Left lung (tissue), 14 donors: ENCODE measurements at regions of chr17 and their contacts with region 1.

Region 1: DNA sequence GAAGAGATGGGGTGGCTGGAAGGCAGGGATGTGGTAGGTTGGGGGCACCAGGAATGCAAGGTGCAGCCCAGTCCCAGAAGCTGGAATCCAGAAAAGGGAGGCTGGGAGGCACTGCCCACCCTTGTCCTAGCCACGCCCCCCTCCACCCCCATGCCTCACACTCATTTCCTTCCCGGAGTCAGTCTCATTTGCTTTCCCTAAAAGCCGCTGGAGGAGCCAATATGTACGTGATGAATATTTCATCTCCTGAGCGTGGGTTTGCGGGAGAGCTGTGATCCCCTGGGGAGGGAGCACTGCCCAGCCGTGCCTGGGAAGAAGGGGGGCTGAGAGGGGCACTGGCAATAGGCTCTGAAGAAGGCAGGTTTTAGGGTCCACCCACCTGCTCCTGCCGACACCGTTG is 124.5 kb upstream of the LHX1 start:
- DNase-seq: no peak
- ATAC-seq: no peak
- H3K4me3 ChIP-seq: no peak overlapping the region
- H3K27ac ChIP-seq: no peak overlapping the region
- H3K4me1 ChIP-seq: peaks cover 0 to 5% of the 10 kb centered on the region in 2 donors
- H3K27me3 ChIP-seq: peaks cover 26 to 94% of the 10 kb centered on the region in 2 donors
- CTCF ChIP-seq: no peak

Region 2: GRCh38 chr17:36859706-36860105 is 46.9 kb after region 1 on chr17:
- intact Hi-C with region 1: loop called in 1 of 2 experiments (anchors 5 kb)
- DNase-seq: no peak
- ATAC-seq: no peak
- H3K4me3 ChIP-seq: no peak overlapping the region
- H3K27ac ChIP-seq: no peak overlapping the region
- H3K4me1 ChIP-seq: no peaks in the 10 kb centered on the region
- H3K27me3 ChIP-seq: peaks cover 0 to 70% of the 10 kb centered on the region in 2 donors
- CTCF ChIP-seq: no peak